Mammary epithelial cell (primary cell): ENCODE measurements at regions of chr7 and their contacts with region 1.

Region 1: GRCh38 chr7:106947244-106947728 is 82.2 kb downstream of the PIK3CG start:
- DNase-seq: peak; percentile 62
- H3K4me3 ChIP-seq: no peak overlapping the region
- H3K27ac ChIP-seq: no peak overlapping the region
- H3K4me1 ChIP-seq: no peaks in the 10 kb centered on the region
- H3K27me3 ChIP-seq: peaks cover 2% of the 10 kb centered on the region
- CTCF ChIP-seq: peak; percentile 39 to 56

Region 2: GRCh38 chr7:106793015-106793975 is 154.0 kb before region 1 on chr7:
- CTCF ChIA-PET with region 1: no interaction called
- dilution Hi-C with region 1: no loop called
- in situ Hi-C with region 1: no loop called
- intact Hi-C with region 1: loop called (anchors 1 kb)
- DNase-seq: peak; percentile 12
- H3K4me3 ChIP-seq: no peak overlapping the region
- H3K27ac ChIP-seq: no peak overlapping the region
- H3K4me1 ChIP-seq: no peaks in the 10 kb centered on the region
- H3K27me3 ChIP-seq: peaks cover 5% of the 10 kb centered on the region
- CTCF ChIP-seq: peak; percentile 51 to 71

Region 3: GRCh38 chr7:107065929-107066247 is 118.6 kb after region 1 on chr7:
- CTCF ChIA-PET with region 1: no interaction called
- dilution Hi-C with region 1: no loop called
- in situ Hi-C with region 1: no loop called
- intact Hi-C with region 1: no loop called
- DNase-seq: no peak
- H3K4me3 ChIP-seq: no peak overlapping the region
- H3K27ac ChIP-seq: no peak overlapping the region
- H3K4me1 ChIP-seq: no peaks in the 10 kb centered on the region
- H3K27me3 ChIP-seq: peaks cover 7% of the 10 kb centered on the region
- CTCF ChIP-seq: no peak

Region 4: GRCh38 chr7:107194049-107194448 is 246.8 kb after region 1 on chr7:
- CTCF ChIA-PET with region 1: interaction called, 10 read pairs
- dilution Hi-C with region 1: no loop called
- in situ Hi-C with region 1: no loop called
- intact Hi-C with region 1: no loop called
- DNase-seq: no peak
- H3K4me3 ChIP-seq: no peak overlapping the region
- H3K27ac ChIP-seq: no peak overlapping the region
- H3K4me1 ChIP-seq: no peaks in the 10 kb centered on the region
- H3K27me3 ChIP-seq: no peaks in the 10 kb centered on the region
- CTCF ChIP-seq: no peak